ENCODE measurements at regions of chr2 and their contacts with region 1.

Region 1: GRCh38 chr2:106038601-106039375 is 155.3 kb downstream of the UXS1 start:
- DNase-seq: peak; percentile 28
- H3K4me3 ChIP-seq: no peak overlapping the region
- H3K27ac ChIP-seq: no peak overlapping the region
- H3K4me1 ChIP-seq: no peaks in the 10 kb centered on the region
- H3K27me3 ChIP-seq: no peaks in the 10 kb centered on the region
- CTCF ChIP-seq: no peak

Region 2: DNA sequence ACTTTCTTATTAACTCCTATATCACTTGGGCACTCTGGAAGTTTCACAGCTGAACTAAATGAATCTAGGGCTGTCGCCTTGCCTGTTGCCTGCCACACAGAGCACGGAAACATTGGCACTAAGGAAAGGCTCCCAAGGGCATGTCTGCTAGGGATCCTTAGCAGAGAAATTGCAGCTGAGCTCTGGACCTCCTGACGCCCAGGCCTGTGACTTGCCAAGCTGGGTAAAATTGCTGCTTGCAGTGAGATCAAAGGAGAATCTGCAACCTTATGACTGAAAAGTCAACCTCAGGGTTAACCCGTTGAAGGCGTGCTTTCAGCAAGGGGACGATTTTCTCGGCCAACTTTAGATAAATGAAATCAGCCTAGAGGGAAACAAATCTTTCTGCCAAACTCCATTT is 104.3 kb before region 1 on chr2:
- CTCF ChIA-PET with region 1: no interaction called
- dilution Hi-C with region 1: loop called (anchors 5 kb)
- in situ Hi-C with region 1: no loop called
- intact Hi-C with region 1: no loop called
- DNase-seq: no peak
- H3K4me3 ChIP-seq: no peak overlapping the region
- H3K27ac ChIP-seq: no peak overlapping the region
- H3K4me1 ChIP-seq: peaks cover 15% of the 10 kb centered on the region
- H3K27me3 ChIP-seq: no peaks in the 10 kb centered on the region
- CTCF ChIP-seq: no peak

Region 3: GRCh38 chr2:106098081-106098480 is 59.3 kb after region 1 on chr2:
- CTCF ChIA-PET with region 1: no interaction called
- dilution Hi-C with region 1: loop called (anchors 5 kb)
- in situ Hi-C with region 1: no loop called
- intact Hi-C with region 1: no loop called
- DNase-seq: no peak
- H3K4me3 ChIP-seq: no peak overlapping the region
- H3K27ac ChIP-seq: no peak overlapping the region
- H3K4me1 ChIP-seq: no peaks in the 10 kb centered on the region
- H3K27me3 ChIP-seq: no peaks in the 10 kb centered on the region
- CTCF ChIP-seq: peak; percentile 20 to 44